ENCODE measurements at regions of chr20 and their contacts with region 1.

Region 1: DNA sequence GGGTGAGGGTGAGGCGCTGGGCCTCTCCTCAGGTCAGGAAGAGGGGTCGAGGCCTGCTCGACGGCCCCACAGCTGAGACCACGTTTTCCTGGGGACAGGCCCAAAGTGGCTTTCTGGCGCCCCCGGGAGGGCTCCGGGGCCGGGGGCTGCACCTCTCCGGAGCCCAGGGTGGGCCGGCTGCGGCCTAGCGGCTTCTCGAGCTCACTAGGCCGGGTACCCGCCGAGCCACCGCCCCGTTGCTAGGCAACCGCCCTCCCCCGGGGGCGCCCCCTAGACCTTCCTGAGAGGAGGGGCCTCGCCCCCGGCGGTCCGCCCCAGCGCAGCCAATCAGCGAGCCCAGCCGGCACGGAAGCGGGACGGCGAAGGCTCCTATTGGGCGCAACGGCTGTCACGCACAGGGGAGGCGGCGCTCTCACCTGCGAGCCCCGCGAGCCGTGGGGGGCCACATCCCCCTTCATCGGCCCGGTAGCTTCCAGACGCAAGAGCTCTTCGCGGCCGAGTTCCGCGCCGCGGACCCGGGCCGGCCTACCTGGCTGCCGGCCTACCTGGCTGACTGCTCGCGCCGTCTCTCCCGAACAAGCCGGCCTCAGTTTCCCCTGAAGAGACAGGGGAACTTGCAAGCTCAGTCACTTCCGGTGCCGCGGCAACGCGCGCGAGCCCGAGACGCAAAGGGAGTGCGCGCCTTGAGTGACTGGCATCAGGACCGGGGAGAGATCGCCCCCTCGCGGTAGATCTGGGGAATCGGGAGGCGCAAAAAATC is 831 bp upstream of the BCL2L1 start:
- DNase-seq: peak; percentile 96
- H3K4me3 Mint-ChIP-seq: peak overlapping the region; percentile 91
- H3K27ac Mint-ChIP-seq: peak overlapping the region; percentile 93
- H3K4me1 Mint-ChIP-seq: peaks cover 40% of the 10 kb centered on the region
- H3K27me3 Mint-ChIP-seq: no peaks in the 10 kb centered on the region
- CTCF ChIP-seq: peak; percentile 82

Region 2: GRCh38 chr20:31572701-31573554 is 150.6 kb before region 1 on chr20:
- CTCF ChIA-PET with region 1: interaction called, 35 read pairs
- POLR2A ChIA-PET with region 1: interaction called, 6 read pairs
- intact Hi-C with region 1: no loop called
- DNase-seq: peak; percentile 99
- H3K4me3 Mint-ChIP-seq: peak overlapping the region; percentile 87
- H3K27ac Mint-ChIP-seq: peak overlapping the region; percentile 96
- H3K4me1 Mint-ChIP-seq: peaks cover 27% of the 10 kb centered on the region
- H3K27me3 Mint-ChIP-seq: no peaks in the 10 kb centered on the region
- CTCF ChIP-seq: no peak

Region 3: GRCh38 chr20:31644701-31645100 is 78.8 kb before region 1 on chr20:
- CTCF ChIA-PET with region 1: interaction called, 11 read pairs
- POLR2A ChIA-PET with region 1: interaction called, 51 read pairs
- intact Hi-C with region 1: no loop called
- DNase-seq: no peak
- H3K4me3 Mint-ChIP-seq: no peak overlapping the region
- H3K27ac Mint-ChIP-seq: no peak overlapping the region
- H3K4me1 Mint-ChIP-seq: no peaks in the 10 kb centered on the region
- H3K27me3 Mint-ChIP-seq: no peaks in the 10 kb centered on the region
- CTCF ChIP-seq: no peak

Region 4: GRCh38 chr20:31674895-31675827 is 48.3 kb before region 1 on chr20:
- CTCF ChIA-PET with region 1: interaction called, 170 read pairs
- POLR2A ChIA-PET with region 1: interaction called, 58 read pairs
- intact Hi-C with region 1: loop called (anchors 5 kb)
- DNase-seq: peak; percentile 83
- H3K4me3 Mint-ChIP-seq: peak overlapping the region; percentile 63
- H3K27ac Mint-ChIP-seq: peak overlapping the region; percentile 60
- H3K4me1 Mint-ChIP-seq: peaks cover 51% of the 10 kb centered on the region
- H3K27me3 Mint-ChIP-seq: no peaks in the 10 kb centered on the region
- CTCF ChIP-seq: no peak

Region 5: DNA sequence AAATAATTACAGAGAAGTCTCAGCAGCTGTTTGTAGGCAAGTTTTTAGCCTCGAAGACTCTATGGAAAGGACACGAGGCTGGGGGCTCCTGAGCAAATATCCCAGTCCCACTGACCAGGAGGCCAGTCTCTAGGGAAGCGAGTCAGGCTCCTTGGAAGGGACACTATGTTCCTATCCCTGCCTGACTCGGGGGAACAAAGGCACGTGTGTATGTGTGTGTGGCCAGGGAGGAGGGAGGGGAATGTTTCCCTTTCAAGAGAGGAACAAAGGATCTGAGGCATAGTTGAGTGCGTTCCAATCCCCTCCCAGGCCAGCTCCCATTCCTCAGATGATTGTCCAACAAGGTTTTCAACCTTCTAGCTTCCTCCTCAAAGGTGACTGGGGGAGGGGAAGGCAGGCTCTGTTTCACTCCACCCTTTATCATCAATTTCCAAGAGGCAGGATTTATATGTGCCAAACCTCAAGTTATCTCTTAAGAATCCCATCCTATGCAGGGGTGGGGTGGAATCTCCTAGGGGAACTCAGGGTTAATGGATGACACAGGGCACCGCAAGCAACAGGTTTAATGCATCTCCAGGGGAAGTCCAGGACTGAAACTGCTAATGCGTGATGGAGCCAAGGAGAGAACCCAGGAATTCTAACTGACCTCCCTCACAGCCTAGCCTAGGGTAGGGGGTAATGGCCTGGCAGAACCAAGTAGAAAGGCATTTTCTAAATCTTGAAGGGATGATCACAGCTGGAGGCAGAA is 10.8 kb before region 1 on chr20:
- CTCF ChIA-PET with region 1: interaction called, 429 read pairs
- POLR2A ChIA-PET with region 1: interaction called, 491 read pairs
- intact Hi-C with region 1: loop called (anchors 1 kb)
- DNase-seq: peak; percentile 92
- H3K4me3 Mint-ChIP-seq: peak overlapping the region; percentile 70
- H3K27ac Mint-ChIP-seq: peak overlapping the region; percentile 96
- H3K4me1 Mint-ChIP-seq: peaks cover 78% of the 10 kb centered on the region
- H3K27me3 Mint-ChIP-seq: no peaks in the 10 kb centered on the region
- CTCF ChIP-seq: no peak

Region 6: GRCh38 chr20:31788578-31788977 is 65.1 kb after region 1 on chr20:
- CTCF ChIA-PET with region 1: interaction called, 3 read pairs
- POLR2A ChIA-PET with region 1: no interaction called
- intact Hi-C with region 1: loop called (anchors 5 kb)
- DNase-seq: peak; percentile 16
- H3K4me3 Mint-ChIP-seq: no peak overlapping the region
- H3K27ac Mint-ChIP-seq: no peak overlapping the region
- H3K4me1 Mint-ChIP-seq: no peaks in the 10 kb centered on the region
- H3K27me3 Mint-ChIP-seq: no peaks in the 10 kb centered on the region
- CTCF ChIP-seq: no peak

Measured in MCF 10A (cell line).